ENCODE measurements at regions of chr1 and their contacts with region 1.

Region 1: GRCh38 chr1:66242646-66243547 is 291.1 kb upstream of the SGIP1 start:
- DNase-seq: peak; percentile 82
- H3K4me3 Mint-ChIP-seq: no peak overlapping the region
- H3K27ac Mint-ChIP-seq: no peak overlapping the region
- H3K4me1 Mint-ChIP-seq: peaks cover 3% of the 10 kb centered on the region
- H3K27me3 Mint-ChIP-seq: peaks cover 6% of the 10 kb centered on the region

Region 2: DNA sequence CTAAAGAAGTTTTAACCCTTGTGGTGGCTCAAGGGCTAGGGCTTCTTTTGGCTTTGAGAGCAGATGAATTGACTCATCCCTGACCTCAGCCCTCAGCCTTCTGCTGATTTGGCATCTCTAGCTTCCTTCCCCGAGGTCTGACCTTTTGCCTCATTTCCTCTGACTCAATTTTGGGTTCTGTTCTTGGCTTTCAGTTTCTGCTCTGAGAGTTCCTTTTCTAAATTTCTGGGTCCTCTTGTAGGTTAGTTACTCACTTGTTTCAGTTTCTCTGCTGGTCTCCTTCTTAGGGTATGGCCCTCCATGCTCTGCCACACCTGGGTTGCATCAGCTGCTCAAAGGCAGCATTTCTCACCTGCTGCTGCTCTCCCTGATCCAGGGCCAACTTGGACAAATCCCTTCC is 430.8 kb before region 1 on chr1:
- CTCF ChIA-PET with region 1: interaction called, 7 read pairs
- POLR2A ChIA-PET with region 1: interaction called, 10 read pairs
- DNase-seq: peak; percentile 83
- H3K4me3 Mint-ChIP-seq: peak overlapping the region; percentile 0
- H3K27ac Mint-ChIP-seq: peak overlapping the region; percentile 80
- H3K4me1 Mint-ChIP-seq: peaks cover 41% of the 10 kb centered on the region
- H3K27me3 Mint-ChIP-seq: peaks cover 21% of the 10 kb centered on the region

Region 3: DNA sequence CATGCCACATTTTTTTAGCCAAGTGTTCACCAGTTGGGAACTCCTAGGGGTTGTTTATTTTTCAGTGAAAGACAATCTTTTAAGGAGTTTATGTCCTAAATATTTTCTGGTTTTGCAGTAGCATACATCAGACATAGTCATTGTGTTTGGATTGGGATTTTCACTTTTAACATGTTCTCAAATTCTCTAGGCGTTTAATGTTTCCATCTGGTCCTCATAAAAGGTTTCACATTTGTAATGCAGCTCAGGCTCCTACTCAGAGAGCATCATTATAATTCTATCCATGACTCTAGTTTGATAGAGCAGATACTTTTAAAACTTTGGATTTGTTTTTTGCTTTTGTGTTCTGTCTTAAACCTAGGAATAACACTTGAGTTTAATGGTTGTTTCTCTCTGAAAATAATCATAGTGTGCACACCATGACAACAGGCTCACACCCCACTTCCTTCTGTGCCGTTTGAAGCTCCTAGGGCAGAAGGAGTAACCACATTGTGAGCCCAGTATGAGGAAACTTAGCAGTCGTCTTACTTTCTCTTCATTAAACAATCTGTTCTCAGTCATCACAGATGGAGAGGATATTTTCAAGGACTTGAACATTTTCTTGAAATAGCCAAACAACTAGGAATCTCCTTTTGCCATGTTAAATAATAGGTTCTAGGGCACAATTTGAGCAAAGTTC is 230.7 kb before region 1 on chr1:
- CTCF ChIA-PET with region 1: no interaction called
- POLR2A ChIA-PET with region 1: no interaction called
- DNase-seq: no peak
- H3K4me3 Mint-ChIP-seq: no peak overlapping the region
- H3K27ac Mint-ChIP-seq: no peak overlapping the region
- H3K4me1 Mint-ChIP-seq: no peaks in the 10 kb centered on the region
- H3K27me3 Mint-ChIP-seq: peaks cover 13% of the 10 kb centered on the region

Region 4: GRCh38 chr1:66197120-66197519 is 45.8 kb before region 1 on chr1:
- CTCF ChIA-PET with region 1: interaction called, 12 read pairs
- POLR2A ChIA-PET with region 1: no interaction called
- DNase-seq: no peak
- H3K4me3 Mint-ChIP-seq: no peak overlapping the region
- H3K27ac Mint-ChIP-seq: no peak overlapping the region
- H3K4me1 Mint-ChIP-seq: no peaks in the 10 kb centered on the region
- H3K27me3 Mint-ChIP-seq: peaks cover 5% of the 10 kb centered on the region

Region 5: DNA sequence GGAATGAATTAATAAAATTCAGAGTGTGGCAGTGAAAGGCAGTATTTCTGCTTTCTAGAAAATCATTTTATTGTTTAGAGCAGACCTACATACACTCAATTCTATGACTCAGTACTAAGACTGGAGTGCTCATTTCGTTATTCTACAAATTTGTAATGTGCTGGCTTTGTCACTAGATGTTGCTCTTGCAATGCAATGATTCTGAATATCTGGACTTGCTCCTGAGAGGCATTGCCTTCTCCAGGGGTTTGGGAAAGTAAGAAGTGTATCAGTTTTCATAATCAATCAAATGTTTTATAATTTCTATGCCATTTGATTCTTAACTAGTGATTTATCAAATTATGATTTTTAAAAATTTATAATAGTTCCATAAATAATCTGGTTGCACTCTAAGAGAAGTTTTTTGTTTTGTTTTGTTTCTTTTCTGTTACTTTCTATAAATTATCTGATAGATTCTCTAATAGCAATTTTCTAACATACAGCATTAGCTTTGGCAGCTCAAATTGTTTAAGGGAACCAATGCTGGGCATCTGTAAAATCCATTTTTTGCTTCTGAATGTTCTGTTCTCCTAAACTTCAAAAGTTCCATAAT is 10.5 kb after region 1 on chr1:
- CTCF ChIA-PET with region 1: interaction called, 28 read pairs
- POLR2A ChIA-PET with region 1: interaction called, 6 read pairs
- DNase-seq: no peak
- H3K4me3 Mint-ChIP-seq: no peak overlapping the region
- H3K27ac Mint-ChIP-seq: no peak overlapping the region
- H3K4me1 Mint-ChIP-seq: peaks cover 74% of the 10 kb centered on the region
- H3K27me3 Mint-ChIP-seq: no peaks in the 10 kb centered on the region

Region 6: DNA sequence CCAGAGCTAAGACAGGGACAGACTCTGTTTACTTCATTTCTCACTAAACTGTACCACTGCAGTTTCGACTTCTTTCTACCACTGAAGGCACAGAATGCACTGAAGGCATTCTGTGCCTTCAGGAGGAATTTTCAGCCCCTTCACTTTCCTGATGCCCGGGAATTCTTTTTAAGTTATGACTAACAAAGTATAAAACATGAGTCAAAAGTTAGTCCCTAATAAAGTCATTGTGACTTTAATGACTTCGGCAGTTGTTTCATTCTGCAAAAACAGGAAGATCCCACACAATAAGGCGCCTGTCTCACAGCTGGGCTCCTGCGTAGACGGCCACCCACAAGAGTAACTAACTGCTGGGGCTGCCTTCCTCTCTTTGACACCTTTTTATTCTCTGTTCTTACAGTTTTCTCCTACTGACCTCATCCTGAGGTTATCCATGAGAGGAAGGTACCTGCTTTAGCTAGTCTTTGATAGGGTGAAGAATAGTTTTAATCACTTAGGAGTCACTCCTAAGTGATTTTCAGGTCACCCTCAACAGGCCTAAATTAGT is 107.2 kb after region 1 on chr1:
- CTCF ChIA-PET with region 1: interaction called, 6 read pairs
- POLR2A ChIA-PET with region 1: interaction called, 13 read pairs
- DNase-seq: peak; percentile 55
- H3K4me3 Mint-ChIP-seq: peak overlapping the region; percentile 66
- H3K27ac Mint-ChIP-seq: peak overlapping the region; percentile 80
- H3K4me1 Mint-ChIP-seq: peaks cover 94% of the 10 kb centered on the region
- H3K27me3 Mint-ChIP-seq: no peaks in the 10 kb centered on the region

Region 7: DNA sequence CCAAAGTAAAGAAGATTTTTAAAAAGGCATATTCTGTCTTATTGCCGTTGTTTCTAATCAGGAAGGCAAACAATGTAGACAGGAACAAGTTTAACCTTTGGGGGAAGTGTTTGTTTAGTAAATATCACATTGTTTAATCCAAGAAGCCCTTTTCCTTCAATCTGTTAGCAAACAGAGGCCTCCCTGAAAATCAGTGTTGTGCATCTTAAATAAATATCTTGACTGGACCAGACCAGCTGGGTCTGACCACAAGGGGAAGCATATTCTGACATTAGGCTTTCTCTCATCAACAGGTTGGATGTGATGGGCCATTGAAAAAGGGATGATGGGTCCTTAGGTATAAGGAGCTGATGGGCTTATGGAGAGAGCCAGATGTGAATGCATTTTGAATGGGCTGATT is 209.3 kb after region 1 on chr1:
- CTCF ChIA-PET with region 1: interaction called, 422 read pairs
- POLR2A ChIA-PET with region 1: interaction called, 72 read pairs
- DNase-seq: no peak
- H3K4me3 Mint-ChIP-seq: no peak overlapping the region
- H3K27ac Mint-ChIP-seq: no peak overlapping the region
- H3K4me1 Mint-ChIP-seq: no peaks in the 10 kb centered on the region
- H3K27me3 Mint-ChIP-seq: peaks cover 23% of the 10 kb centered on the region

Region 8: DNA sequence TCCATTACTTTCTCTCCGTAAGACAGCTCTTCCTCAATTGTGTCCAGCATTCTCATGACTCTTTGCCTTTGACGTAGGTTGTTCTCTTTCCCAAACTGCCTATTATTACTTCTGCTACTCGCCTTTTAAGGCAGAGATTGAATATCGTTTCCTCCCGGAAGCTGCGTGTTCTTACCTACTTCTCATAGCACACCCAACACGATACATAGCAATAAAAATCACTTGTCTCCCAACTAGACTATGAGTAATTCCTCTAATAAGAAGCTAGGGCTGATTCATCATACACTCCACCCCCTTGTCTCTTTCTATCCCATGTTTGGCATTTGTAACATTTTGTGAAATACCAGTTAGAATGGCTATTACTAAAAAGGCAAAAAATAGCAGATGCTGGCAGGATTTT is 235.2 kb after region 1 on chr1:
- CTCF ChIA-PET with region 1: no interaction called
- POLR2A ChIA-PET with region 1: no interaction called
- DNase-seq: no peak
- H3K4me3 Mint-ChIP-seq: no peak overlapping the region
- H3K27ac Mint-ChIP-seq: no peak overlapping the region
- H3K4me1 Mint-ChIP-seq: no peaks in the 10 kb centered on the region
- H3K27me3 Mint-ChIP-seq: peaks cover 23% of the 10 kb centered on the region

Measured in activated CD4-positive, alpha-beta memory T cell treated with anti-CD3 and anti-CD28 coated beads, Interleukin-2, amount 10 ng/mL, durations not matched to agents 7 days and 5 days (primary cell).